Endothelial cell of umbilical vein (primary cell): ENCODE measurements at regions of chr6 and their contacts with region 1.

Region 1: GRCh38 chr6:25193460-25194171 is 85.6 kb upstream of the CARMIL1 start:
- DNase-seq: peak; percentile 96
- H3K4me3 ChIP-seq: peak overlapping the region in 1 of 3 experiments; percentile 45
- H3K27ac ChIP-seq: peak overlapping the region; percentile 93
- H3K4me1 ChIP-seq: peaks cover 22% of the 10 kb centered on the region
- H3K27me3 ChIP-seq: no peaks in the 10 kb centered on the region
- CTCF ChIP-seq: no peak
- POLR2A ChIP-seq: peak; percentile 35

Region 2: DNA sequence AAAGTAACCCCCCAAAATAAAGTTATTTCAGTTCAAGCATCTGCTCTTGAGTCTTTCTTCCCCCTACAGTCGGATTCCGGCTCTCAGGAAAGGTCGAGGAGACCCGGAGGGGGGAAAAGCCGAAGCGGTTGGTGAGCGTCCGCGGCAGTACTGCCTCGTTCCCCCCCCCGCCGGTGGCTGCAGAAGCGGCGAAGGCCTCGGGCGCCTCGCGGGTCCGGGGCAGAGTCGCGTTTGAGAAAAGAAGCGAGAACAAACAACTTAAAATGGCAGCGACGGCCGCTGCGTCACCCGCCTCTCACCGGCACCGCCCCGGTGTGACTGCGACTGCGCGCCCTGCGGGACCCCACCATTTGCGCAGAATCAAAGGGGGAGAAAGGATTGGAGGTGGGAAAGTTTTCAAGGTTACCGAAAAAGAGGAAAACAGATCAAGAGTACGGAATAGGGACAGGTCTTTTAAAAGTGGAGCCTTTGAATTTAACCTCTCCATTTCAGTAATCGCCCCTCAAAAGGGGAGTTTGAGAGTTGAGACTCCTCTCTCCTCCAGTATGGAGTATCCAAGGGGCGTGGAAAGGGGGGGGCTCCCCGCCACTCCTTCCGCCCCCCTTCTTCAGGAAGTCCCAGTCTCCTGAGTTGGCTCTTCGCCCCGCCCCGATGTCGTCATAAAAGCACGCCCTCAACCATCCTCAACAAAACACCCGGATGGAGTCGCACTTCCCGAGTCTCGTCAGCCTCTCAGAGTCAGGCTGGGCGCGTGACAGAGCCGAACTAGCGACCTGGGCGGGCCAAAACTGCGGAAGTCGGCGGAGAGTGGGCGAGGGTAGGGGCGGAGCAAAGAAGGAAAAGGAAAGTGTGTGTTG is 472.8 kb before region 1 on chr6:
- CTCF ChIA-PET with region 1: no interaction called
- POLR2A ChIA-PET with region 1: no interaction called
- dilution Hi-C with region 1: no loop called
- intact Hi-C with region 1: loop called (anchors 2 kb)
- DNase-seq: peak; percentile 100
- H3K4me3 ChIP-seq: peak overlapping the region; percentile 81 to 89 (median 86)
- H3K27ac ChIP-seq: peak overlapping the region; percentile 97
- H3K4me1 ChIP-seq: peaks cover 34% of the 10 kb centered on the region
- H3K27me3 ChIP-seq: no peaks in the 10 kb centered on the region
- CTCF ChIP-seq: no peak
- POLR2A ChIP-seq: peak; percentile 98

Region 3: DNA sequence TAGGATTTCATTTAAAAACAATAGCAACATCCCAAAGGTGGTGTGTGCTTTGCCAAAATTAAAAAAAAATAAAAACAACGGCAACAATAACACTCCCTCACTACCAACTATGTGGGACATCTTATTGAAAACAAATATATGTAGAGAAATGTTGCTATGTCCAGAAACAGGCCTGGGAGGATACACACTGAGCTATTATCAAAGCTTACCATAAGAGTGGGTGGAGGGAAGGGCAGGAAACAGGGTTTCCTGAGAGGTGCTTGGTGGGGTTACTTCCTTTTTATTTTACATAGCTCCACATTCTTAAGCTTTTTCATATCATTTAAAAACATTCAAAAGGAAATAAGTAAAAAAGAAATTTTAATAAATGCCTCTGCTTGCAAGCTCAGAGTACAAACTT is 107.9 kb before region 1 on chr6:
- CTCF ChIA-PET with region 1: no interaction called
- POLR2A ChIA-PET with region 1: no interaction called
- dilution Hi-C with region 1: no loop called
- intact Hi-C with region 1: loop called (anchors 1 kb)
- DNase-seq: peak; percentile 95
- H3K4me3 ChIP-seq: no peak overlapping the region
- H3K27ac ChIP-seq: peak overlapping the region; percentile 68
- H3K4me1 ChIP-seq: peaks cover 46% of the 10 kb centered on the region
- H3K27me3 ChIP-seq: no peaks in the 10 kb centered on the region
- CTCF ChIP-seq: no peak
- POLR2A ChIP-seq: peak; percentile 65

Region 4: GRCh38 chr6:25138237-25139125 is 55.1 kb before region 1 on chr6:
- CTCF ChIA-PET with region 1: interaction called, 4 read pairs
- POLR2A ChIA-PET with region 1: no interaction called
- dilution Hi-C with region 1: no loop called
- intact Hi-C with region 1: loop called (anchors 1 kb)
- DNase-seq: peak; percentile 84
- H3K4me3 ChIP-seq: peak overlapping the region; percentile 29 to 71 (median 43)
- H3K27ac ChIP-seq: peak overlapping the region; percentile 45
- H3K4me1 ChIP-seq: peaks cover 13% of the 10 kb centered on the region
- H3K27me3 ChIP-seq: no peaks in the 10 kb centered on the region
- CTCF ChIP-seq: peak in 1 of 2 donors; percentile 11
- POLR2A ChIP-seq: no peak

Region 5: GRCh38 chr6:25144919-25145318 is 48.7 kb before region 1 on chr6:
- CTCF ChIA-PET with region 1: no interaction called
- POLR2A ChIA-PET with region 1: no interaction called
- dilution Hi-C with region 1: no loop called
- intact Hi-C with region 1: loop called (anchors 1 kb)
- DNase-seq: no peak
- H3K4me3 ChIP-seq: no peak overlapping the region
- H3K27ac ChIP-seq: no peak overlapping the region
- H3K4me1 ChIP-seq: no peaks in the 10 kb centered on the region
- H3K27me3 ChIP-seq: no peaks in the 10 kb centered on the region
- CTCF ChIP-seq: no peak
- POLR2A ChIP-seq: no peak

Region 6: DNA sequence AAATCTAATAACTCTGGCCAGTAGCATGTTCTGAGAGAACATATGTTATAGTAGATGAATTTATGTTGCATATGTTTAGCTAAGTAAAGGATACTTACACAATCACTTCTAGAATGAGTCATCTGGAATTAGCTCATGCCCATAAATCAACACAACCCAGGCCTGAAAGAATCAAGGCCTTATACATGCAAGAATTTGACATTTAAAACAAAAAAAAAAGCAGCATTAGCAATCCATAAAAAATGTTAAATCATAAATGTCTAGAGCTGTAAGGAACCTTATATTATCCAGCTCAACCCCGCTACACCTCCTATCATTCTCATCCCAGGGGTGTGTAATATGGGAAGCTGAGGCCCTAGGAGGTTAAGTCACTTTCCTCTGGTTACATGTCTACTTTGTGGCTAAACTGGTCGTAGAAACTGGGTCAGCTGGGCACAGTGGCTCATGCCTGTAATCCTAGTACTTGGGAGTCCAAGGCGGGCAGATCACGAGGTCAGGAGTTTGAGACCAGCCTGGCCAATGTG is 19.6 kb before region 1 on chr6:
- CTCF ChIA-PET with region 1: interaction called, 9 read pairs
- POLR2A ChIA-PET with region 1: interaction called, 4 read pairs
- dilution Hi-C with region 1: no loop called
- intact Hi-C with region 1: loop called (anchors 1 kb)
- DNase-seq: peak; percentile 93
- H3K4me3 ChIP-seq: no peak overlapping the region
- H3K27ac ChIP-seq: peak overlapping the region; percentile 38
- H3K4me1 ChIP-seq: peaks cover 37% of the 10 kb centered on the region
- H3K27me3 ChIP-seq: no peaks in the 10 kb centered on the region
- CTCF ChIP-seq: no peak
- POLR2A ChIP-seq: no peak

Region 7: DNA sequence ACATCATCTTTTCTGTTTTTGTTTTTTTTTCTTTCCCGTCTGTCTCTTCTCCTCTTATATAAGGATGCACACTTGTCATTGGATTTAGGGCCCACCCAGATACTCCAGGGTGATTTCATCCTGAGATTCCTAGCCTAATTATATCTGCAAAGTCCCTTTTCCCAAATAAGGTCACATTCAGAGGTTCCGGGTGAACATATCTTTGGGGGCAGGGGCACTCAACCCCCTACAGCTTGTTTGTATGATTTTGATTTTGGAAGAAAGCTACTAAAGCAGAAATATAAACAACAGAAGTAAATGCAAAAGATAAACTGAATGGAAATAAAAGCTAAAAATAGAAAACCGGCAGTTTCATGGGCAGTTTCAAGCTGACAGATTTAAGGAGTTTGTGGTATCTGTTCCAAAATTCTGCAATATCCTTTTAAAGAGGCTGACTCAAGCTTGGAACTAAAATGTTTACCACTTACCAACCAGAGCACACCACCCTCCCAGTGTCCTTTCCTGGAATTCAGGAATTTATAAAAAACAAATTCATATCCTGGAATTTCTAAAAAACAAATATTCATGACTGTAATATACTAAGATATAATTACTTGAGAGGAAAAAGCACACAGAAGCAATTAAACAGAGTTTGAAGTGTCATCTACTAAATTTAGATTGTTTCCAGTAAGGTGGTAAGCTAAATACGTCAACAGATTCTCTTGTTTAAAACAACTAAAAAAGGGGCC is 14.4 kb before region 1 on chr6:
- CTCF ChIA-PET with region 1: interaction called, 9 read pairs
- POLR2A ChIA-PET with region 1: interaction called, 4 read pairs
- dilution Hi-C with region 1: no loop called
- intact Hi-C with region 1: loop called (anchors 1 kb)
- DNase-seq: peak; percentile 84
- H3K4me3 ChIP-seq: no peak overlapping the region
- H3K27ac ChIP-seq: no peak overlapping the region
- H3K4me1 ChIP-seq: peaks cover 26% of the 10 kb centered on the region
- H3K27me3 ChIP-seq: no peaks in the 10 kb centered on the region
- CTCF ChIP-seq: no peak
- POLR2A ChIP-seq: no peak

Region 8: DNA sequence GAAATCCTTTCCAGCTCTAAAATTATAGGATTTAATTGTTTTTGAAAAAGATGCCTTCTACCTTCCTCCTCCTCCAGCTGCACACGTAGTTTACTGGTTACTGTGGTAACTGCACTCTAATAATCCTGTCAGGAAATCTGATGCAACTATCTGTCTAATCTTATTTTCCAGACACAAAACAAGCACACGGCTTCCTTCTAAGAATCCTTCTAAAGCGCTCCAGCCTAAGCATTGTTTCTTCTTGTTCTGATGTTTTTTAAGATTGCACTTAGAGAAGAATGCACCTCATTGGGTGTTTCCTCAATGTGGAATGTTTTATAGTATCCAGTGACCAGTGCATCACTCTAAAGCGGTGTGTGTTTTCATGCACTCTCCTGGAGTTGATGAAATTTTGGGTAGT is 149.2 kb after region 1 on chr6:
- CTCF ChIA-PET with region 1: no interaction called
- POLR2A ChIA-PET with region 1: no interaction called
- dilution Hi-C with region 1: no loop called
- intact Hi-C with region 1: no loop called
- DNase-seq: peak; percentile 63
- H3K4me3 ChIP-seq: no peak overlapping the region
- H3K27ac ChIP-seq: no peak overlapping the region
- H3K4me1 ChIP-seq: no peaks in the 10 kb centered on the region
- H3K27me3 ChIP-seq: no peaks in the 10 kb centered on the region
- CTCF ChIP-seq: no peak
- POLR2A ChIP-seq: no peak